ENCODE measurements at regions of chrX and their contacts with region 1.

Region 1: GRCh38 chrX:65667503-65668376 is at the start of gene MSN:
- DNase-seq: peak; percentile 86
- H3K4me3 Mint-ChIP-seq: peak within 1 kb of the TSS; percentile 93
- H3K27ac Mint-ChIP-seq: peak within 1 kb of the TSS; percentile 97
- H3K4me1 Mint-ChIP-seq: peaks cover 29% of the 10 kb centered on the region
- H3K27me3 Mint-ChIP-seq: no peaks in the 10 kb centered on the region
- total RNA-seq, gene MSN: 494 to 502 TPM

Region 2: GRCh38 chrX:65601530-65602220 is 66.1 kb before region 1 on chrX:
- CTCF ChIA-PET with region 1: interaction called, 12 read pairs
- POLR2A ChIA-PET with region 1: interaction called, 11 read pairs
- intact Hi-C with region 1: loop called (anchors 1 kb)
- DNase-seq: peak; percentile 70
- H3K4me3 Mint-ChIP-seq: no peak overlapping the region
- H3K27ac Mint-ChIP-seq: peak overlapping the region; percentile 91
- H3K4me1 Mint-ChIP-seq: peaks cover 76% of the 10 kb centered on the region
- H3K27me3 Mint-ChIP-seq: no peaks in the 10 kb centered on the region

Region 3: DNA sequence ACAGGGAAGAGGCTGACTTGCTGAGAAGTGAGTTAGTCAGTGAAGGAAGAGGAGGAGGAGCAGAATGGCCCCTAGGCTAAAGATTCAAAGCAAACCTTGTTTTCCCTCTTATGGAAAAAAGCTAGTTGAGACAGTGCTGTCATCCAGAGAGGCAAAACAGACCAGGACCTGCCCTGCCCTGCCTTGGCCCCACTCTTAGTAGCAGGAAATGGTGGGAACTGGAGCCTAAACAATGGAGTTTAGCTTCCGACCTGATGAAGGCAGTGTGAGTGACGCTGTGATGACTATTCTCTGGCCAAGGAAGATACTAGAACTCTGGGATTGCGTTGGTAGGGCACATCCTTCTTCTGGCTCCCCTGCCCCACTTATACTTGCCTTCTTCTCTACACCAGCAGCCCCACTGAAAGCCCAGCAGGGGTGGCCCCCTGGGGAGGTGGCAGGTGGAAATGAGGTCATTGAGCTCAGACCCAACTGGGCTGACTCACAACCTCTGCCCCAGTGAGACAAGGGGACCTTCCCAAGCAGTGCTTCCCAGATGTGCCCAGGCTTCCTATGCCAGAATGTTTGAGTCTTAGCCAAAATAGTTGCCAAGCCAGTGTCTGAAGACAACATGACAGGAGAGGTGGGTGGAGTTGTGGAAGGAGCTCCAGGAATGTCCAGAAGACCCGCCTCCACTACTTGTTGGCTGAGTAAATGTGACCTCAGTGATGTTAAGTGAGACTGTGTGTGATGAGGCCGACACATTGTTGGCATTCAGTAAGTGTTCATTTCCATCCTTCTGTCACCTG is 38.5 kb after region 1 on chrX:
- CTCF ChIA-PET with region 1: interaction called, 3 read pairs
- POLR2A ChIA-PET with region 1: interaction called, 8 read pairs
- intact Hi-C with region 1: loop called (anchors 1 kb)
- DNase-seq: peak; percentile 80
- H3K4me3 Mint-ChIP-seq: peak overlapping the region; percentile 33
- H3K27ac Mint-ChIP-seq: peak overlapping the region; percentile 96
- H3K4me1 Mint-ChIP-seq: peaks cover 71% of the 10 kb centered on the region
- H3K27me3 Mint-ChIP-seq: no peaks in the 10 kb centered on the region

Measured in activated CD4-positive, alpha-beta memory T cell treated with anti-CD3 and anti-CD28 coated beads for 36 hours (primary cell).